Sciatic nerve (tissue), 2 donors: ENCODE measurements at regions of chr5 and their contacts with region 1.

Region 1: DNA sequence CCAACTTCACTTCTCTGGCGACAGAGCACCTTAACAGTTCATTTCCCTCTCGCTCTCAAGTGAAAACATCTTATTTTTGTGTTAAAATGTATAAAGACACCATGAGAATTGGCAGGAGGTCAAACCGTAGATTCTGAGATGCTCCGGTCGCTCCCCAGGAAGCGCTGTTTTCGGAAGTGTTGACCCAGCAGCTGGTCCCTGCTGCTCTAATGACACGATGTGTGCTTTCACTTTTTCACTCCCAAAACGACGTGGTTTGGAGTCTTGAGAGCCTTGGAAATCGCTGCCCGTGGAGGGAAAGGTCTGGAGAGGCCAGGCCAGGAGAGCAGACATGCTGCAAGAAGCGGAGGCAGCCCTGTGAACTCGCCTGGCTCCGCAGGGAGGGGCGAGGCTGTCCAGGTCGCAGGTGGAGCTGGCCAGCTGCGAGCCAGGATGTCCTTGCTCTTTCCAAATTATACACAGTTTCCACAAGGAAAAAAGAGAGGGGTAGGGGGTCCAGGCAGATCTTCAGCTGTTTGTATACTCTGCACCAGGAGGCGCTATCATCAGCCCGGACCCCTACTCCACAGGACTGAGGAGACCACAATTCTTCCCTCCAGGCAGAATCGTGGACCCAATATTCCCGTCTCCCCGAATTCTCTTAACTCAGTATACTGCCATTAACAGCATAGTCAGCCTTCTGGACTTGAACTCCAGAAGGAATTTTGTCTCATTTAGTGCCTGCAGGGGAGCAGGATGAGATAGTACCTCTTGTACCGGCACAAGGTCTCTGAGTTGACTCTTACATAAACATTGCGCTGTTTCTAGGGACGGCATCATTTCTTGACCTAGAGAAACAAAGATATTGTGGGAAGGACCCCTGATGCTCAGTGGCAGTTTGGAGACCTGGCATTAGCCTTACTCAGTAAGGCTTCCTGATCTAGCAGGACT is 248.6 kb upstream of the ANKRD55 start:
- DNase-seq: no peak
- ATAC-seq: peak; percentile 59

Region 2: DNA sequence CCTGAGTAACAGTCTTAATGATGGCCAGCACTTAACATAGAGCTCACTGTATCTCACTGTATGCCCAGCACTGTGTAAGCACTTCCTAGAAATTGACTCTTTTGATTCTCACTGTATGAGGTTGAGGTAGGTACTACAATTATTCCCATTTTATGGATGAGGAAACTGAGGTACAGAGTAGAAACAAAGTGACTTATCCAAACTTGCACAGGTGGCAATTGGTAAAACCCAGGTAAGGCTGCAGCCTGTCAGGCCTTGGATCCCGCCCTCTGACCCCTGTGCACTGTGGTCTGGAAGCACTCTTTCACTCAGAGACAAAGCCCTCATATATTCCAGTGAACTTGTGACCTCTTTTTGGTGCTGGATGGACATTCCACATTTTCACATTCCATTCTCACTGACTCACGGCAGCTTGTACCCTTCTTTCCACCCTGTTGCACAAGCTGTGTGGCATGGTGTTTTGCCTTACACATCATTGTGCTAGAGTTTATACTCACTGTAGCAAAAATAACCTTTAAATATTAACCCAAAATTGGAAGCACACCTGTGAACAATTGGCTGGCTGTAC is 270.3 kb before region 1 on chr5:
- intact Hi-C with region 1: no loop called
- DNase-seq: no peak
- ATAC-seq: peak; percentile 71

Region 3: DNA sequence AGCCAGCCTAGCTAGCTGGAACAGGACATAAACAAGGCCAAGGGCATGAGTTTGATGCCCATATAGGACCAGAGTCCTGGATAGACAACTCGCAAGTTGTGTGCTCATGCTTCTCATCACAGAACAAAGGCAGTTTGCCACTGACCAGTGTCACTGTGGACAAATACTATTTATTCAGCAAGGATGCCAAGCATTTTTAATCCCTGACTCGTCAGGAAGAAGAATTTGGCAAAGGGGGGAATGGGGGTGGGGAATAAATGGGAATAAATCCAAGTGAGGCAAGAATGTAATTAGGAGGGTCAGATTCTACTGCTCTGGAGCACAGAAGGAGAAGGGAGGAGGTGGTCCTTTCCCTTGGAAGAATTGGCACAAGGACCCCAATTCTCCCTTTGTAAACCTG is 201.7 kb before region 1 on chr5:
- intact Hi-C with region 1: loop called (anchors 10 kb)
- DNase-seq: no peak
- ATAC-seq: peak; percentile 35

Region 4: DNA sequence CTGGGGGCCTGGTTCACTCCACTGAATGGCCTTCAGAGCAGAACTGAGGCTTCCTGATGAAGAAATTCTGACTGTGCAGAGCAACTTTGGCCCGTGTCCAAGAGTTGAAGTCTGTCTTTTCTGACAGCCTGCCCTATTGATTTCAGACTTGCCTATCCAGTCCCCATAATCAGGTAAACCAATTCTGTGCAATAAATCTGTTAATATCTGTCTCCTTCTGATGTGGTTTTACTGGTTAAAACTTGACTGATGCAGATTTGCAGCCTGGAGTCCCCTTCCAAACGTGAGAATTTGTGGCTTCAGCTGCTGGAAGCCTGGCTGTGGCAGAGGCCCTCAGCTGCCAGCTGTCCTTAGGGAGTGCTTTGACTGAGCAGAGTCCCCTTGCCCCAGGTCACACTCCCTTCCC is 35.3 kb after region 1 on chr5:
- intact Hi-C with region 1: no loop called
- DNase-seq: no peak
- ATAC-seq: no peak

Region 5: GRCh38 chr5:56686337-56687195 is 204.9 kb after region 1 on chr5:
- intact Hi-C with region 1: no loop called
- DNase-seq: no peak
- ATAC-seq: no peak